ENCODE measurements at regions of chr18 and their contacts with region 1.

Region 1: DNA sequence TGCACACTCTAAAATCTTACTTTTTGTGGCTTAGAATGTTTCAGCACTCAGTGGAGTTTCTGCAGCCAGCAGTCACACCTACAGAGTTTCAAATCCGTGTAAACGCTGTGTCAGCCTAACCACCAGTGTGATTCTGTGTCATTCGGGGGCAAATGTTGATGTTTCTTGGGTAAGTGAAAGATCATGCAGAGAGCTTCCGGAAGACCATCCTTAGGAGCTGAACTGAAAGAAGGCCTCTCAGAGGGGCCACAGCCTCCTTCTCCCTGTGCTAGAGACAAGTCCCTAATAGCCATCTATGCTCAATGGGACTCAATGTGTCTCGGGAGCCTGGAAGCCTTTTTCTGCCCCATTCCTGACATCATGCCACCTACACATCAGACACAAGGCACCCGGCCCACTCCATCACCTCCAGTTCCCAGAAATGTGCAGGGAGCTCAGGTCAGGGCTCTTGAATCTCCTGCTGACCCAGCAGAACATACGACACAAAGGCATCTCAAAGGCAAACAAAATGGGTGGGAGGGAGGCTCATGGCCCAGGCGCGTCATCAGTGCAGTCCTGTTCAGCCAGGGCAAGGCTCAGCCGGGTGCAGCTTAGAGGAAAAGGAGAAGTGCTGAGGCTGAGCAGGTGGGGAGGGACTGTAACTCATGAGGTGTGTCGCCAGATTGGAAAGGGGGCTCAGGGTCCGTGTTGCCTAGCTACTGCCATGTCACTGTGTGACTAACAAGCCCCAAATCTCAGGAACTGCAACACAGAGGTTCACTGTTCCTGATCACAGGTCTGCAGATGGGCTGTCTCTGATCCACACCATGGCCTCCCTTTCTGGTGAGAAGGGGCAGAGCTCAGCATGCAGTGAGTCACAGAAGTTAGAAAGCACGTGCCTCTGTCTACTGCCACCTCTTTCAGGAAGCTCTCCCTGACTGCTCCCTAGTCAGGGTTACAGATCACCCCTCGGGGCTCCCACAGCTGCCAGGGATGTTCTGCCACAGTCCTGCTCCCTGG is 82.0 kb downstream of the SMAD7 start:
- DNase-seq: peak; percentile 38
- H3K4me3 Mint-ChIP-seq: peak overlapping the region; percentile 20
- H3K27ac Mint-ChIP-seq: peak overlapping the region; percentile 94
- H3K4me1 Mint-ChIP-seq: peaks cover 37% of the 10 kb centered on the region
- H3K27me3 Mint-ChIP-seq: no peaks in the 10 kb centered on the region

Region 2: DNA sequence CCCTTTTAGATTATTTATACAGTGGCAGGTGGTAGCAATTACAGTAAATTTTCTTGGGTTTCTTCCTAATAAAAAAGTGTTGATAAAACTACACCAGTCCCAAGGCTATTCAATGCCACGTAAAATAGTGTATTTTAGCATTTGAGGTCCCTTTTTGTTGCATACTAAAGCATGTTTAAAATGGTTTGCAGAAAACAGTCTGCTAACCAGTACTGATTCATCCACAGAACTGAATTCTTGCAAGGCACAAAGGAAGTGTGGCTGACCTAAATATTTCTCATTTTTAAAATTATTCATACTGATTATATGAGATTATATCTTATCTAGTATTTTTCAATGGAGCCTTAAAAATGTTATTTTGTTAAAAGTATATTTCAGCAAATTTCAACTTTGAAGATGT is 1036.4 kb before region 1 on chr18:
- intact Hi-C with region 1: no loop called
- DNase-seq: no peak
- H3K4me3 Mint-ChIP-seq: no peak overlapping the region
- H3K27ac Mint-ChIP-seq: no peak overlapping the region
- H3K4me1 Mint-ChIP-seq: peaks cover 17% of the 10 kb centered on the region
- H3K27me3 Mint-ChIP-seq: no peaks in the 10 kb centered on the region

Region 3: DNA sequence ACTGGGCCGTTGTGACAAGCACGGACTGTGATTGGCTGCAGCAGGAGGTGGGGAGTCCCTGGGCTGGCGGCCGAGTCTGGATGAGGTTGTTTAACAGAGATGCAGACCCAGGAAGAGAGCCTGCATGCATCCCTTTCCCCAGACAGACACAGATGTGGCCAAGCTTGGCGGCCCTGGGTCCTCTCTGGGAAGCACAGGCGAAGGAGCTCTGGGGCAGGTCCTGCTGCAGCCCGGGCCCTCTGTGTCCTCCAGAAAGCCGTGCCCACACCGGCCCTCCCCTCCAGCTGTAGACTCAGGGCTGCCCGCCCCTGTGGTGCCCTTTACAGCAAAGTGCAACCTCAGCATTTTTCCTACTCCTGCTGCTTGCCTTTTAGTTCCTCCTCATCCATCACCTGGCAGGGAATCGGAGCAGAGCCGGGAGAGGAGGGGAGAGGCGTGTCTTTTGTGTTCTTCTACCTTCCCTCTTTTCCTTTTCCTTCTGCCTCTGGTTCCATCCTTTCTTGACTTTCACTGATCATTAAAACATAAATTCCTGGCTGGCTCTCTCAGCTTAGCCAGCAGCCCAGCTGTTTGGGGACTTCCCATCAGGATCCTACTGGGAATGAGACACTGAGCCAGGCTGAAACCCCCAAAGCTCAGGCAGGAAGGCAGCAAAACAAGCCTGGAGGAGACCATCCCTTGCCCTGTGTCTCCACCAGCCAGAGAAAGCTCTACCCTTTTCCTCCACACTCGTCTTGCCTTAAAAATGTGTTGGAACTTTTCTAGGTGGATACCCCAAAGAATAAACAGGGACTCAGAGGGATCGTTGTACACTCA is 255.0 kb before region 1 on chr18:
- intact Hi-C with region 1: no loop called
- DNase-seq: no peak
- H3K4me3 Mint-ChIP-seq: no peak overlapping the region
- H3K27ac Mint-ChIP-seq: no peak overlapping the region
- H3K4me1 Mint-ChIP-seq: no peaks in the 10 kb centered on the region
- H3K27me3 Mint-ChIP-seq: no peaks in the 10 kb centered on the region

Region 4: GRCh38 chr18:48777026-48777743 is 91.6 kb before region 1 on chr18:
- intact Hi-C with region 1: loop called (anchors 5 kb)
- DNase-seq: peak; percentile 43
- H3K4me3 Mint-ChIP-seq: no peak overlapping the region
- H3K27ac Mint-ChIP-seq: no peak overlapping the region
- H3K4me1 Mint-ChIP-seq: peaks cover 2% of the 10 kb centered on the region
- H3K27me3 Mint-ChIP-seq: no peaks in the 10 kb centered on the region

Region 5: DNA sequence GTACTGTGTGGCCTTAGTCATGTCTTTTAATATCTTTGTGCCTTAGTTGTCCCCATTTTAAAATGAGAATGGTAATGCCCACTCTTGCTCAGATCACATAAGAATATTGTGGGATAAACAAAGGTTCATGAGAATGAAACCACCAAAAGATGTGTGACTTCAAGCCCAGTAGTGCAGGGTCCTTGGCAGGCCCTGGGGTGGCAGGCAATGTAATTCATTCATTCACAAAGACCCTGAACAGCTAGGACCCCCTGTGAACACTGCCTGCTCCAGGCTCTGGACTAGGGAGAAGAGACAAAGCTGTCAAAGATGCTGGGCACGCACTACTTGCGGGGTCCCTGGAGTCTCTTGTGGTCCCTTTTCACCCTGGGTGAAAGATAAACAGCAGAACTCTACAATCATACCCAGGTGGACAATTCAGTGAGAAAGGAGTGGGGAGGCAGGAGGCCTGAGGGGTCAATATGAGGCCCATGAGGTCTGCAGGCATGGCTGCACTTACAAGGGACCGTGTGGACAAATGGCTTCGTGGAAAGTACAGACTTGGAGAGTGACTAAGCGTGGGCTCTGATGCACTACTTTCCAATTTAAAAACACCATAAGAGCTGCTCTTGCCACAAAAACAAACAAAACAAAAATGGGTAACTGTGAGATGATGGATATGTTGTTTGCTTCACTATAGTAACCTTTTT is 54.1 kb before region 1 on chr18:
- intact Hi-C with region 1: loop called (anchors 1 kb)
- DNase-seq: no peak
- H3K4me3 Mint-ChIP-seq: no peak overlapping the region
- H3K27ac Mint-ChIP-seq: peak overlapping the region; percentile 85
- H3K4me1 Mint-ChIP-seq: peaks cover 47% of the 10 kb centered on the region
- H3K27me3 Mint-ChIP-seq: no peaks in the 10 kb centered on the region

Region 6: DNA sequence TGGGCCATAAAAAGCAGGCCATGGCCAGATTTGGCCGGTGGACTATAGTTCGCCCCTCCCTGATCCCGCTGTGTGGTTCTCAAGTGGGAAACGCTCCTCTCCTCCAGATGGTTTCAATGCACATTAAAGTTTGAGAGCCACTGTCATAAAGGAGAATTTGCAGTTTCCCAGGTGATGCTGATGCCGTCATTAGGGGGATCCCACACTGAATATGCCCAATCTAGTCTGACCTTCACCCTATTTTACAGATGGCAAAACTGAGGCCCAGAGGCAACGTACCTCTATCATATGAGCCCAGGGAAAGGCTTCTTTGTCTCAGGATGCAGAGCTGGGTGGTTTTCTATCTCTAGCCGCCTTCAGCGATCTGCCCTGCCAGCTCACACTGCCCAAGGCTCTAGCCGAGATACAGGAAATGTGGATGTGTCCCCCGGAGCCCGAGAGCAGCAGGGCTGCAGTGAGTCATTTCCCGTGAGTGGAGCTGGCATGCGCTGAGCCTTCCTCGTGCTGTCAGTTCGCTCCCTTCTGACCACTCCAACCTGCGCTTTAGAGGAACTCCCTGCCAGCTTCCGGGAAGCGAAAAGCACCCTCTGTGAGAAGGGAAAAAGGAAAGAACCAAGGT is 34.2 kb before region 1 on chr18:
- intact Hi-C with region 1: loop called (anchors 1 kb)
- DNase-seq: peak; percentile 66
- H3K4me3 Mint-ChIP-seq: peak overlapping the region; percentile 85
- H3K27ac Mint-ChIP-seq: peak overlapping the region; percentile 98
- H3K4me1 Mint-ChIP-seq: peaks cover 62% of the 10 kb centered on the region
- H3K27me3 Mint-ChIP-seq: no peaks in the 10 kb centered on the region

Region 7: GRCh38 chr18:48951448-48952286 is 82.9 kb after region 1 on chr18:
- intact Hi-C with region 1: loop called (anchors 1 kb)
- DNase-seq: peak; percentile 67
- H3K4me3 Mint-ChIP-seq: peak overlapping the region; percentile 93
- H3K27ac Mint-ChIP-seq: peak overlapping the region; percentile 94
- H3K4me1 Mint-ChIP-seq: peaks cover 40% of the 10 kb centered on the region
- H3K27me3 Mint-ChIP-seq: peaks cover 9% of the 10 kb centered on the region

Region 8: DNA sequence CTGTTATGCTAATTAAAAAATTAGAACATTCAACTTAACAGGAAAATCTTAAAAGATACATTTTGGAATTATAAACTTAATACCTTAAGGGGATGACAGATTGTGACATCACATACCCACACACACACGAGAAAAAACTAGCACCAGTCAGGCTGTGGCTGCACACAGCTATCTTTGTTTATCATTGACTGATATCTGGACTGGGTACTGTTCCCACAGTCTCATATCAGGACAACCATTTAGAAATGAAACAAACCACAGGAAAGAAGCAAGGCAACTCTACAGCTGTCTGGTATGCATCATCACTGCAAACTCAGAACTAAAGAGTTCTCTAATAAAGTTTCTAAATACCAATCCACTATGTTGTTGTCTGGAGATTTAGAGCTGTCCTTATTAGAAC is 292.9 kb after region 1 on chr18:
- intact Hi-C with region 1: loop called (anchors 5 kb)
- DNase-seq: peak; percentile 41
- H3K4me3 Mint-ChIP-seq: no peak overlapping the region
- H3K27ac Mint-ChIP-seq: no peak overlapping the region
- H3K4me1 Mint-ChIP-seq: peaks cover 22% of the 10 kb centered on the region
- H3K27me3 Mint-ChIP-seq: peaks cover 4% of the 10 kb centered on the region

Region 9: GRCh38 chr18:49227441-49228165 is 358.8 kb after region 1 on chr18:
- intact Hi-C with region 1: loop called (anchors 1 kb)
- DNase-seq: peak; percentile 68
- H3K4me3 Mint-ChIP-seq: no peak overlapping the region
- H3K27ac Mint-ChIP-seq: no peak overlapping the region
- H3K4me1 Mint-ChIP-seq: peaks cover 31% of the 10 kb centered on the region
- H3K27me3 Mint-ChIP-seq: no peaks in the 10 kb centered on the region